Activated naive CD4-positive, alpha-beta T cell treated with anti-CD3 and anti-CD28 coated beads for 36 hours (primary cell): ENCODE measurements at regions of chr11 and their contacts with region 1.

Region 1: GRCh38 chr11:124622531-124623451 is at the start of gene TBRG1:
- DNase-seq: peak; percentile 88
- H3K4me3 Mint-ChIP-seq: peak within 1 kb of the TSS; percentile 96
- H3K27ac Mint-ChIP-seq: peak within 1 kb of the TSS; percentile 96
- H3K4me1 Mint-ChIP-seq: peaks cover 22% of the 10 kb centered on the region
- H3K27me3 Mint-ChIP-seq: no peaks in the 10 kb centered on the region
- total RNA-seq, gene TBRG1: 28.3 to 28.6 TPM

Region 2: DNA sequence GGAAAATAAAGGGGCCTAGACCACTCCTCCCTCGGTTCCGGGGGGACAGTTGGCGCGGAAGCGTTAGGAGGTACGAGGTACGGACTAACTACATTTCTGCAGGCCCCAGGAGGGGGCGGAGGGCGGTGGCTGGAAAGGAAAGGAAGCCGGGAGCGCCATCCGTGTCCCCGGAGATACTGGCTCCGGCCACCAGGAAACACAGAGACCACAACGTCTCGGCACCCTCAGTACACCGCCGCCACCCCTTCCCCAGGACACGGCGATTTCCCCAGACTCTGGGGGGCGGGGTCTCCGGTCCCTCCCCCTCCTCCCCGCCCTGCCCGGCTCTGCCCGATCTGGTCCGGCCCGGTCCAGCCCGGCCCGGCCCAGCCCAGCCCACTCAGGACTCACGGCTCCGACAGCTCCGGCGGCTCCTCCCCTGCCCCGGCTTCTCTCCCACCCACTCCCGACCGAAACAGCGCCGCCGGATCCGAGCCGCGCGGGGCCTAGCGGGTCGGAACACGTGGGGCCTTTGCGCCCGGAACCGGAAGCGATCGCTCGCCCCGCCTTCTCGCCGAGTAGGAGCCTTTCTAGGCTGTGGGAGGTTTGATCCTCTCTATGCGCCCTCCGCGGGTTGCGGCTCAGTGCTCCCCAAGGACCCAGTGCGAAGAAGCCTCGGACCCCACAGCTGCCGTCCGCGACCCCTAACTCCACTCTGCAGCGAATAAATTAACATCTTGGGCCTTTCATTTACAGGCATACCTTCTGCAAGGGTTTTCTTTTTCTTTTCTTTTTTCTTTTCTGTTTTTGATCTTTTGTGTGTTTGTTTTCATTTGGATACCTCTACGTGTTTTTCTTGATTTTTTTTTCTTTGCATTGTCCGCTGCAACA is 881.4 kb before region 1 on chr11 and contains the start of gene ZNF202:
- CTCF ChIA-PET with region 1: no interaction called
- intact Hi-C with region 1: loop called (anchors 5 kb)
- DNase-seq: peak; percentile 94
- H3K4me3 Mint-ChIP-seq: peak within 1 kb of the TSS; percentile 98
- H3K27ac Mint-ChIP-seq: peak within 1 kb of the TSS; percentile 92
- H3K4me1 Mint-ChIP-seq: peaks cover 40% of the 10 kb centered on the region
- H3K27me3 Mint-ChIP-seq: no peaks in the 10 kb centered on the region
- total RNA-seq, gene ZNF202: 5.9 to 6.4 TPM

Region 3: DNA sequence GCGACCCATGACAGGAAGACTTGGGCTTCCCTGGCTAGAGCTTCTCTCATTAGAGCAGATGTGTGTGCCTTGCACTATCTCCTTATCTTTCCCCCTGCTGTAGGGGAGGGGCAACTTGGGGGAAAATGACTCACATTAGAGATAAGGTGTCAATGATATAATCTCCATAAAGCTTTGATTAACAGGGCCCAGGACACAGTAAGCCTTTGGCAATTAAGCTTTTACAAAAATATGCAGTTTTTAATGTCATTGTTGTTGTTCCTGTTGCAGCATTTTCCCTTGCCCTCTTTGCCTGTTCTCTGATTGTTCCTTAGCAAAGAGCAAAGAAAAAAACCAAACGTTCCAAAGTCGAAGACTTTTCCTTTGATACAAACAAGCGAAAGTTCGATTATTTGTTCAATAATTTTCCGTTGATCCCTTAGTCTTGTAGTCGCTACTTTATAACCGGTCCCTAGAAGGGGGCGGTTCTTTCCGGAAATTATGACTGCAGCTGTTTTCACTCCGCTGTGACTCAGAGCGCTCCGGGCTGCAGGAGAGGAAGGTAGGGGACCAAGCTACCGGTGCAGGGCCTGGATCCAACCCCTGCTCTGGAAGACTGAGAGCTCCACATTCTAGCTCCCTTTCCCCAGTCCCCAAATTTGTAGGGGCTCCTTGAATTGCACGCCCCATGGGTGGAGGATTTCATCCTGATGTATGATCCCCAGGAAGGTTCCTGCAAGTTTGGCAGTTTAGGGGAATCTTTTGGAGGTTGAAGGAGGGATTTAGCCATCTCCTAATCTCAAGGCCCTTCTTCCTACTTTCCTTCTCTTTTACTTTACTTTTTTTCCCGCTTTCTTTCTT is 507.6 kb before region 1 on chr11 and contains the start of gene VWA5A:
- CTCF ChIA-PET with region 1: no interaction called
- intact Hi-C with region 1: loop called (anchors 2 kb)
- DNase-seq: peak; percentile 93
- H3K4me3 Mint-ChIP-seq: peak within 1 kb of the TSS; percentile 82
- H3K27ac Mint-ChIP-seq: peak within 1 kb of the TSS; percentile 56
- H3K4me1 Mint-ChIP-seq: peaks cover 9% of the 10 kb centered on the region
- H3K27me3 Mint-ChIP-seq: no peaks in the 10 kb centered on the region
- total RNA-seq, gene VWA5A: 9.7 to 11.4 TPM

Region 4: GRCh38 chr11:124577716-124578427 is 44.9 kb before region 1 on chr11:
- CTCF ChIA-PET with region 1: no interaction called
- intact Hi-C with region 1: no loop called
- DNase-seq: no peak
- H3K4me3 Mint-ChIP-seq: no peak overlapping the region
- H3K27ac Mint-ChIP-seq: no peak overlapping the region
- H3K4me1 Mint-ChIP-seq: no peaks in the 10 kb centered on the region
- H3K27me3 Mint-ChIP-seq: peaks cover under 1% of the 10 kb centered on the region

Region 5: GRCh38 chr11:124644426-124645280 is 21.9 kb after region 1 on chr11:
- CTCF ChIA-PET with region 1: interaction called, 5 read pairs
- intact Hi-C with region 1: loop called (anchors 1 kb)
- DNase-seq: peak; percentile 26
- H3K4me3 Mint-ChIP-seq: no peak overlapping the region
- H3K27ac Mint-ChIP-seq: no peak overlapping the region
- H3K4me1 Mint-ChIP-seq: no peaks in the 10 kb centered on the region
- H3K27me3 Mint-ChIP-seq: no peaks in the 10 kb centered on the region

Region 6: DNA sequence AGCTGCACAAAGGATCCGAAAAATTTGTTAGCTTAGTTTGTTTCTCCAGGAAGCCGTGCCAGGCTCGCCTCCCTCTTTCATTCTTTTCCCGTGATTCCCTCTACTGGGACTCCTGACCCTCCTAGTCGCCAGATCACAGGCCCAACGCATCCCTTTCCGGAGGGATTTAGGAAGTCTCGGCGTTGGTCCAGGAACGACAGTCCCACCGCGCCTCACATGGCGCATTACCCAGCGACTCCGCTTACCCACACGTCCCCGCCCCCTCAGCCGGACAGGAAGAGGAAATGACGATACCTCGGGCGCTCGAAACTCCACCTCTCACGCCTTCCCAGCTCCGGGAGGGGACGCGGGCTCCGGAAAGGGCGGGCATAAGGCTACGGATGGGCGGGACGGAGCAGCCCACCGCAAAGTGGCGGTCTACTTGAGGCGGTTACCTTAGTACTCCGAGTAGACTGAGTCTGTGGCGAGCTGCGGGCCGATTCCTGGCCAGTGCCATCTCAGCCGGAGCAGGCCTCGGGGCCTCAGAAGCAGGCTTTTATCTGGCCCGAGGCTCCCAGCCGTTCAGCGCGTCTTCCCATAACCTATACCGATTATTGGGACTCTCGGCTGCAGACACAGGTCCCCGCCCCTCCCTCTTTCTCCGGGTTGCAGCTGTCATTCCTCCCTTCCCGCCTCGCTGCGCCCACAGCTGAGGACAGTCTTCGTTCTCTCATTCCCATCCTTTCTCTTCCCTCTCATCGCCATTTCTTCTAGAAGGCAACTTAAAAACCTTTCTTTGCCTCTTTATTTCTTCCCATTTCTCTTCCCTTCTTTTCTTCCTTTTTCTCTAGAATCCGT is 331.2 kb after region 1 on chr11 and contains the start of gene CCDC15:
- CTCF ChIA-PET with region 1: no interaction called
- intact Hi-C with region 1: loop called (anchors 1 kb)
- DNase-seq: peak; percentile 97
- H3K4me3 Mint-ChIP-seq: no peak within 1 kb of the TSS
- H3K27ac Mint-ChIP-seq: no peak within 1 kb of the TSS
- H3K4me1 Mint-ChIP-seq: peaks cover 7% of the 10 kb centered on the region
- H3K27me3 Mint-ChIP-seq: no peaks in the 10 kb centered on the region
- total RNA-seq, gene CCDC15: 6.1 to 7.3 TPM

Region 7: GRCh38 chr11:125055107-125055715 is 432.4 kb after region 1 on chr11:
- CTCF ChIA-PET with region 1: no interaction called
- intact Hi-C with region 1: no loop called
- DNase-seq: no peak
- H3K4me3 Mint-ChIP-seq: no peak overlapping the region
- H3K27ac Mint-ChIP-seq: no peak overlapping the region
- H3K4me1 Mint-ChIP-seq: no peaks in the 10 kb centered on the region
- H3K27me3 Mint-ChIP-seq: no peaks in the 10 kb centered on the region